ENCODE measurements at regions of chr11 and their contacts with region 1.

Region 1: DNA sequence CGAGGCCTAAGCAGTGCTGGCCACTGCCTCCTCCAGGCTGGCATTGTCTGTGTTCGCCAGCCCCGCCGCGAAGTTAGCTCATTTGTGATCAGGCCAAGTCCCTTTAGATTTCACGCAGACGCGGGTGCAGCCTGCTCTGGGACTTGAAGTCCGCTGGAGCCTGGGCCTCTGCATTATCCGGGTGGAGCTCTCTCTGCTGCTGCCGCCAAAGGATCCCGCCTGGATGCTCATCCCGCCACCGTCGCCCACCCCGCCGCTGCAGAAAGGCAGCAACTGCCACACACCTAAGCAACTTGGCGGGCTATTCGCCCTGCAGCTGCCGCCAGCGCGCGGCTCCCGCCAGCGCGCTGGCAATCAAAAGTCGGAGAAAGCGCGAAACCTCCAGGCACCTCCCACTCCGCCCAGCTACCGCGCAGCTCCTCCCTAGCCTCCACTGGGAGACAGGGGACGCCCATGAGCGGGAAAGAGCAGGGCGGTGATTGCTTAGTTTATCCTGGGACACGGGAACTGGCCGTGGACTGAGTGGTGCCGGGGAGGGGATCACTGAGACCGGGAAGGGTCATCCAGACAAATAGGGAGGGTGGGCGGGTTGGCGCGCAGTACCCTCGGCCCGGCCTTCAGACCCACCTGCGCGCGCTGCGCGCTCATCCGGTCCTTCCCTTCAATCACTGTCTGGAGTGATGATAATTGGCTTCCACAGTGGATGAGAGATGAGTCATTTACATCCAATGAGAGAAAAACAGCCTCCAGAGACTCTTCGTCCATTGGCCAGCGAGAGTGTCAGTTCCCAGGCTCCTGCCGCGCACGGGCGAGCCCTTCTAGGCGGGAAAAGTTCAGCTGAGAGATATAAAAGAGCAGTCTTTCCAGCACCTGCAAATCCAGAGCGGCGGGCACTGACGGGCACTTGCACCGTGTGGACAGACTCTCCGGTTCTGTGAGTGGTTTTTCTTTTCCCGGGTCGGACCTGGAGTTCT is at the start of gene FAM111B:
- DNase-seq: peak; percentile 73
- H3K4me3 Mint-ChIP-seq: peak within 1 kb of the TSS; percentile 93
- H3K27ac Mint-ChIP-seq: peak within 1 kb of the TSS; percentile 82
- H3K4me1 Mint-ChIP-seq: peaks cover 80% of the 10 kb centered on the region
- H3K27me3 Mint-ChIP-seq: no peaks in the 10 kb centered on the region
- total RNA-seq, gene FAM111B: 54.9 and 57.3 TPM in 2 replicates

Region 2: DNA sequence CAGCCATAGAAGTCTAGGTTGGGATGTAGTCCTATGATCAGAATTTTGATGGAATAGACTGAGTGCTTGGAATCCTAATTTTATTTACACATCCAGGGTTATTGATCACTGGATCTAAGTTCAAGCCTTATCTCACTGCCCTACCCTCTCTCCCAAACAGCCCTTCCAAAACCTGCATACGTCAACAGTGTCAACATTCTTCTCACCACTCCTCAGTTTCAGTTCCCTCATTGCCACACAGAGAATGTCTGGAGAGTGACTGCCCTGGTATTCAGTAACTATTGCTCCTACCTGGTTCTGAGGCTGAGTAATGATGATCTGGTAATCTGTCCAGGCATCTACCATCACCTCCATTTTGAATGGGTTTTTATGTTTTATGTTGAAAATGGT is 107.4 kb before region 1 on chr11:
- intact Hi-C with region 1: no loop called
- DNase-seq: no peak
- H3K4me3 Mint-ChIP-seq: no peak overlapping the region
- H3K27ac Mint-ChIP-seq: no peak overlapping the region
- H3K4me1 Mint-ChIP-seq: no peaks in the 10 kb centered on the region
- H3K27me3 Mint-ChIP-seq: peaks cover 4% of the 10 kb centered on the region

Region 3: DNA sequence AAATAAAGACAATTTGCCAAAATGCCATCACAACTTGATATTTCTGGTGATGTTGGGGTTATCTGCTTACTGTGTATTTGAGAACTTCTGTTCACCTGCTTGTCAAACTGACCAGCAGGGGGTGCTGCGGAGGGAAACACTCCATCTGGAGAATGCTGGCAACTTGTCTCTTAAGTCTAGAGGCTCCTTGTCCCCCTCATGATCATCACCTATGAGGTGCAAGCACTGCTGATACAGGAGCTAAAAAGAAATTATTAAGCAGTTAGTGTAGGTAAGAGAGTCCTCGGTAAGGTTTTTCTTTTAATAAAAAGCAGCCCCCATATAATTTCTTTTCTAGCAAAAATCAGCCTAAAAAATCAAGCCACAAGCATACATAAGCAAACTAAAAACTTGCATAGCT is 53.3 kb before region 1 on chr11:
- intact Hi-C with region 1: loop called (anchors 1 kb)
- DNase-seq: peak; percentile 58
- H3K4me3 Mint-ChIP-seq: no peak overlapping the region
- H3K27ac Mint-ChIP-seq: no peak overlapping the region
- H3K4me1 Mint-ChIP-seq: peaks cover 8% of the 10 kb centered on the region
- H3K27me3 Mint-ChIP-seq: peaks cover 31% of the 10 kb centered on the region

Region 4: DNA sequence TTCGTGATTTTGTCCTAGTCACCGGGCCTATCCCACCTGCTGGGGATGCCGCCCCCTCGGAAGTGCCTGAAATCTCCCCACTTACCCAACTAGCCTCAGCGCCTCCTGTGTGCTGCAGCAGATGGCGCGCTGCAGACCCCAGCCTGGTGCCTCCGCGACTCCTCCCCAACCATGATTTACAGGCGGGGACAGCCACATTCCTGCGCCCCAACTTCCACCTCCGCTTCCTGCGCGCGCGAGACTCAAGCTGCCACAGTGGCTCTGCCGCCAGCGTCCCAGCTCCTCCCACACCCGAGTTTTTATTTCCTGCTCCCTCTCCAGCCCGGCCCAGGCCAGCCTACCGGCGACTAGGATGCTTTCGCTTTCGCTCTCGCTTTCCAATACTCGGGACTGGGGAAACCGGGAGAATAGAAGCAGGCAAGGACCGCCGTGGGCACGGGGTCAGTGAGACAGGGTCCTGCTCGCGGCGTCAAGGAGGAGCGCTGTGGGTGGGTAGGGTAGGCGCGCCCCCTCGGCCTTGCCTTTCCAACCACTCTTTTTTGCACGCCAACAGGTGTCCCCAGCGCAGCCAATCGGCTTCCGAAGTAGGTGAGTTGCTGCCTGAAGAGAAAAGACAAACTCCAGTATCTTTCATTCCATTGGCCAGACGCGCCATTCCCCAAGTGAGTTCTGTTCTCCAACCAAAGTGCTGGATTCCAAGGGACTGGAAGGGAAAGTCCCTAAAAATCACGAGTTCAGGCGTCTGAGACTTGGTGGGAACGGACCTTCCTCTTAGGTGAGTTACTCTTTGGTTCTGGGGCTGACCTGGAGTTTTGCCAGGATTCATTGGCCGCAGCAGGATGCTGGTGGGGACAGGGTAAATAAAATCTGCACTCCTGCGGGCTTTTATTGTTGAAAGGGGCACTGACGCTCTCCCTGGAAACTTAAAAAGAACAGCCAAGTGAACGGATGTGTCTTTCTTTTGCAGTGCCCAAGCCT is 36.2 kb after region 1 on chr11 and contains the start of gene FAM111A:
- intact Hi-C with region 1: loop called (anchors 1 kb)
- DNase-seq: peak; percentile 88
- H3K4me3 Mint-ChIP-seq: peak within 1 kb of the TSS; percentile 91
- H3K27ac Mint-ChIP-seq: peak within 1 kb of the TSS; percentile 93
- H3K4me1 Mint-ChIP-seq: peaks cover 62% of the 10 kb centered on the region
- H3K27me3 Mint-ChIP-seq: no peaks in the 10 kb centered on the region
- total RNA-seq, gene FAM111A: 64.8 and 66.4 TPM in 2 replicates

Region 5: DNA sequence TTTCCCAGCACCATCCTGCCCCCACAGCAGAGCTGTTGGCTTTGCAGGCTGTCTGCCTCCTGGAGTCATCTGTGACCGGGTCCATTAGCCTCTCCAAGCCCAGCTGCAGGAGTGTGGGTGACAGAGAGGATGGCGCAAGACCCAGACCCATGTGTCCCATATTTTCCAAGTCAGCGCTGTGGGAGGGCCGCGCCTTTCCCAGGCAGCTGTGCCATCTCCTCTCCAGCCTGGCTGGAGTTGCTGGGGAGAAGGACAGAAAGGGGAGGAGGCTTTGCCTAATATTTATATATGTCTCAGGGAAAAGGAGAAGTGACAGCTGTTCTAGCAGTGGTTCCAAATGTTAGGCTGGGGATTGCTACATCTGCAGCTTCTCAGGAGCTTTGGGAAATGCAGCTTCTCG is 80.9 kb after region 1 on chr11:
- intact Hi-C with region 1: no loop called
- DNase-seq: no peak
- H3K4me3 Mint-ChIP-seq: no peak overlapping the region
- H3K27ac Mint-ChIP-seq: no peak overlapping the region
- H3K4me1 Mint-ChIP-seq: no peaks in the 10 kb centered on the region
- H3K27me3 Mint-ChIP-seq: peaks cover 9% of the 10 kb centered on the region

Measured in activated T-helper 1 cell treated with anti-CD3 and anti-CD28 coated beads, Interleukin-12 subunit alpha, Interleukin-12 subunit beta, Interleukin-2, Interleukin-4 antibody, amounts not matched to agents 30 ng/mL and 10 ng/mL and 1 ng/mL, durations not matched to agents 14 hours and 24 hours and 36 hours (primary cell).